CD4-positive, alpha-beta memory T cell (primary cell): ENCODE measurements at regions of chr4 and their contacts with region 1.

Region 1: GRCh38 chr4:73446336-73446938 is 10.4 kb downstream of the AFP start:
- DNase-seq: peak in 4 of 5 donors; percentile 6 to 32 (median 14)
- H3K4me3 ChIP-seq: no peak overlapping the region
- H3K4me3 Mint-ChIP-seq: no peak overlapping the region
- H3K27ac ChIP-seq: no peak overlapping the region
- H3K27ac Mint-ChIP-seq: no peak overlapping the region
- H3K4me1 ChIP-seq: no peaks in the 10 kb centered on the region
- H3K4me1 Mint-ChIP-seq: no peaks in the 10 kb centered on the region
- H3K27me3 ChIP-seq: no peaks in the 10 kb centered on the region
- H3K27me3 Mint-ChIP-seq: peaks cover 6 to 11% of the 10 kb centered on the region in 2 donors

Region 2: GRCh38 chr4:72701987-72702819 is 744.2 kb before region 1 on chr4:
- CTCF ChIA-PET with region 1: no interaction called
- POLR2A ChIA-PET with region 1: no interaction called
- intact Hi-C with region 1: loop called (anchors 1 kb)
- DNase-seq: peak in 4 of 5 donors; percentile 12 to 27 (median 26)
- H3K4me3 ChIP-seq: peak overlapping the region in 1 of 2 donors; percentile 34
- H3K4me3 Mint-ChIP-seq: peak overlapping the region; percentile 73 to 84 (median 81)
- H3K27ac ChIP-seq: no peak overlapping the region
- H3K27ac Mint-ChIP-seq: peak overlapping the region in 4 of 7 donors; percentile 15 to 85 (median 53)
- H3K4me1 ChIP-seq: no peaks in the 10 kb centered on the region
- H3K4me1 Mint-ChIP-seq: no peaks in the 10 kb centered on the region
- H3K27me3 ChIP-seq: no peaks in the 10 kb centered on the region
- H3K27me3 Mint-ChIP-seq: peaks cover 0 to 3% of the 10 kb centered on the region in 2 donors